ENCODE measurements at regions of chr11 and their contacts with region 1.

Region 1: DNA sequence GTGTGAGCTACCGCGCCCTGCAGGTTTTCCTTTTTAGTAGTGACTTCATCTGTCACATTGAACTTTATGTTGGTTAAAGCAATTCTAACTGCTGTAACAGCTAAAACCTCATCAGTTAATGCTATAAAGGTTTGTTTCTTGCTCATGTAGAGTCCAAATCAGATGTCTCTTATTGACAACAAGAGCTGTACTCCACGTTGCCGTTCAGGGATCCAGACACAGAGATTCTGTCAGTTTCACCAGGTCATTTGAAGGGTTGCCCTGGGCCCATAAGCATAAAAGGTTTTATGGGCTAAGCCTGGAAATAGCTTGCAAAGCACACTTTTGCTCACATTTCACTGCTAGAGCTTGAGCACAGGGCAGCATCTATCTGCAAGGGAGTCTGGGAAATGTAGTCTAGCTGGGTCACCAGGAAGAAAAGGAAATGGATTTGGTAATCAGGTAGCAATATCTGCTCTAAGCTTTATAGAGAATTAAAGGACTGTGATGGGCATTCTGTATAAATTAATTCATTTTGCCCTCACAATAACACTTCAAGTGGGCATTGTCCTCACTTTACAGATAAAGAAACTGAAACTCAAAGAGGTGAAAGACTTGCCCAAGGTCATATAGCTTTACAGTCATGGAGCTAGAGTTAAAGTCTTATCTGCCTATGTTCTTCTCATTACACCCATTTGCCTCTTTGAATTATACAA is 25.2 kb upstream of the PTPRJ start:
- DNase-seq: no peak
- H3K4me3 Mint-ChIP-seq: no peak overlapping the region
- H3K27ac Mint-ChIP-seq: no peak overlapping the region
- H3K4me1 Mint-ChIP-seq: peaks cover 16% of the 10 kb centered on the region
- H3K27me3 Mint-ChIP-seq: no peaks in the 10 kb centered on the region

Region 2: DNA sequence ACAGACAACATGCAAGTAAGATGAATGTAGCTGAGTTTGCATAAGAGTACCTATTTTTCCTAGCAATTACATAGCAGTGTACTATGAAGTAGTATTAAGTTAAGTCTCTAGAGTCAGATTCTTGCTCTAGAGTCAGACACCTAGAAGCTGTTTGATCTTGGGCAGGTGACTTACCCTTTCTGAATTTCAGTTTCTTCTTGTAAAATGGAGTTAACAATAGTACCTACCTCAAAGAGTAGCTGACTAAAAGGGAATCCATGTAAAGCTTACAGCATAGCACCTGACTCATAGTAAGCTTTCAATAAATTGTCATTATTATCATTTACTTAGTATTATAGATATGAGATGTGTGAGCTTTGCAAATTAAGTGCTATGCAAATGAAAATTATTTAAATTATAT is 22.7 kb before region 1 on chr11:
- CTCF ChIA-PET with region 1: interaction called, 22 read pairs
- POLR2A ChIA-PET with region 1: no interaction called
- DNase-seq: no peak
- H3K4me3 Mint-ChIP-seq: no peak overlapping the region
- H3K27ac Mint-ChIP-seq: no peak overlapping the region
- H3K4me1 Mint-ChIP-seq: peaks cover 29% of the 10 kb centered on the region
- H3K27me3 Mint-ChIP-seq: no peaks in the 10 kb centered on the region